Left colon (tissue), 2 donors: ENCODE measurements at regions of chr1 and their contacts with region 1.

Region 1: GRCh38 chr1:17045634-17046333 is 8.0 kb downstream of the SDHB start:
- DNase-seq: no peak
- ATAC-seq: peak; percentile 50

Region 2: GRCh38 chr1:16954579-16954978 is 91.2 kb before region 1 on chr1:
- intact Hi-C with region 1: loop called in 1 of 2 experiments (anchors 5 kb)
- DNase-seq: no peak
- ATAC-seq: no peak

Region 3: GRCh38 chr1:16960560-16961296 is 85.1 kb before region 1 on chr1:
- intact Hi-C with region 1: loop called in 1 of 2 experiments (anchors 10 kb)
- DNase-seq: peak; percentile 88 to 96
- ATAC-seq: peak; percentile 93